ENCODE measurements at regions of chr18 and their contacts with region 1.

Region 1: DNA sequence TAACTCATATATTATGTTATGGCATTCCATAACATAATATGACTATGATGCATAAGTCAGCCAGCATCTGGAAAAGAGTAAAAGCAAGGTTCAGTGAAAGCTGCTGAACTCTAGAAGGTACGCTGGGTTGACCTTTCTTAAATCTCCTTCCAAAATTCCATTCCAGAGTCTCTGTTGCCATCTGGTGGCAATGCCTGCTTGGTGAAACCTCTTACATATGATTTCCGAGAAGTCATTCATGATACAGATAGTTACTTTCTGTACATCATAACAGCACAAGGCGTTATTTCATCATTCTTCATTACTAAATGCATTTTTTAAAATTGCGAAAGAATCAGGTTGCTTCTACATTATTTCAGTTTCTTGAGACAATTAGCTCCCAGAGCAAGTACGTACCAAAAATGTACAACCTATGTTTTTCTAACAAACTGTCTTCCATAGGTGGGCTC is 7.0 kb upstream of the EPG5 start:
- DNase-seq: peak; percentile 39 to 81 (median 63)
- ATAC-seq: peak; percentile 83
- H3K4me3 ChIP-seq: no peak overlapping the region
- H3K4me3 Mint-ChIP-seq: no peak overlapping the region
- H3K27ac ChIP-seq: no peak overlapping the region
- H3K27ac Mint-ChIP-seq: no peak overlapping the region
- H3K4me1 ChIP-seq: peaks cover 7% of the 10 kb centered on the region
- H3K4me1 Mint-ChIP-seq: peaks cover 6% of the 10 kb centered on the region
- H3K27me3 ChIP-seq: no peaks in the 10 kb centered on the region
- H3K27me3 Mint-ChIP-seq: no peaks in the 10 kb centered on the region
- CTCF ChIP-seq: peak; percentile 86

Region 2: DNA sequence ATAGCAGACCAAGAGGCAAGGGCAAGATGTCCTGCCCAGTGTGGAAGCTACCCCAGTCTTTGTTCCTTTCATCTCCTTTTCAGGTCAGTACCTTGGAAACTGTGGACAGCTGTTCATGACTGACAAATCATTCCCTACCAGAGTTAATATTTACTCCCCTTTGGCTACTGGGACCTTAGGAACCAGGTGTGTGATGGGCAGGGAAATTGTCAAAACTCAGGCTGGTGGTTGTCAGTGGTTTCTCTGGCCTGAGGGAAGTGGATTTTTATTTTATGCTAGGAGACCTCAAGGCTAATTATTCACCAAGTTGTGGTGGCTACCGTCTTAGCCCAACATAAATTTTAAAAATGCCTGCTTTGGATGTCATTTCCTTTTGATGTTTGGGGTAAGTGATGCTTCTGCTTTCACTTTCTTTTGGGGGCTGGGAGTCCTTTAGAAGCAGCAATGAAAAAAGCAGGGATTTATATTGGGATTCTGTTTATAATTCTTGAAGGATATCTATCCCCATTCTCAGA is 1174.1 kb before region 1 on chr18:
- CTCF ChIA-PET with region 1: no interaction called
- POLR2A ChIA-PET with region 1: no interaction called
- intact Hi-C with region 1: no loop called
- DNase-seq: peak in 2 of 9 experiments; percentile 3 to 27
- ATAC-seq: no peak
- H3K4me3 ChIP-seq: no peak overlapping the region
- H3K4me3 Mint-ChIP-seq: no peak overlapping the region
- H3K27ac ChIP-seq: peak overlapping the region in 1 of 2 experiments; percentile 1
- H3K27ac Mint-ChIP-seq: no peak overlapping the region
- H3K4me1 ChIP-seq: no peaks in the 10 kb centered on the region
- H3K4me1 Mint-ChIP-seq: peaks cover 3% of the 10 kb centered on the region
- H3K27me3 ChIP-seq: no peaks in the 10 kb centered on the region
- H3K27me3 Mint-ChIP-seq: no peaks in the 10 kb centered on the region
- CTCF ChIP-seq: no peak

Region 3: DNA sequence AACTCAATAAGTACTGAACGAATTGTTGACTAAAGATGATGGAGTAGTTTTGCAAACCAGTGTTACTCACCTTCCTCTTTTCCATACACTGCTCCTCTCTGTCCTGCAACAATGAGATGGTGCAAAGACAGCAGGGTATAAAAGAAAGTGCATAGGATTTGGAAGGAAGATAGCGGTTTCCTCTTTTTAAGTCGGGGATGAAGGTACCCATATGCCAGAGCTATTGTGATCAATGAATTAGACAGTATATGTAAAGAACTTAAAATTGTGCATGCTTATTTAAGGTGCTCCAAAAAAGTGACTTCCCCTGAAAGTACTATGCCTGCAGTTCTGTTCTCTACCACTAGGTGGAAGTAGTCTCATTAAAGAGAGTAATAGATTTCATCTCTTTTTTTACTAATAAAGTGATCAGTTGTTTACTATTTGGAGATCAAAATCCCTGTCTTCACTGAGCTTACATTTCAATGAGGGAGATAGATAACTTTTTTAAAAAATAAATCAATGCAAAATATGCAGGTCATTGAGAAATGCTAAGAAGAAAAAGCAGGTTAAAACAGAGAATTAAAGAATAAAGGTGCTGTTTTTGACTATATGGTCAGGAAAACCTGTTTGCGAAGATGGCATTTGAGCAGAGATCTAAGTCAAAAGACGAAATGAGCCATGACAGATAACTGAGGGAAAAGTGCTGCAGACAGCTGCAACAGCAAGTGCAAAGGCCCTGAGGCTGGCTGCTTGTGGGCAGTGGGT is 698.6 kb before region 1 on chr18:
- CTCF ChIA-PET with region 1: no interaction called
- POLR2A ChIA-PET with region 1: no interaction called
- intact Hi-C with region 1: loop called in 1 of 2 experiments (anchors 10 kb)
- DNase-seq: peak in 2 of 9 experiments; percentile 31 to 33
- ATAC-seq: no peak
- H3K4me3 ChIP-seq: no peak overlapping the region
- H3K4me3 Mint-ChIP-seq: no peak overlapping the region
- H3K27ac ChIP-seq: no peak overlapping the region
- H3K27ac Mint-ChIP-seq: no peak overlapping the region
- H3K4me1 ChIP-seq: no peaks in the 10 kb centered on the region
- H3K4me1 Mint-ChIP-seq: no peaks in the 10 kb centered on the region
- H3K27me3 ChIP-seq: no peaks in the 10 kb centered on the region
- H3K27me3 Mint-ChIP-seq: no peaks in the 10 kb centered on the region
- CTCF ChIP-seq: peak; percentile 92

Region 4: DNA sequence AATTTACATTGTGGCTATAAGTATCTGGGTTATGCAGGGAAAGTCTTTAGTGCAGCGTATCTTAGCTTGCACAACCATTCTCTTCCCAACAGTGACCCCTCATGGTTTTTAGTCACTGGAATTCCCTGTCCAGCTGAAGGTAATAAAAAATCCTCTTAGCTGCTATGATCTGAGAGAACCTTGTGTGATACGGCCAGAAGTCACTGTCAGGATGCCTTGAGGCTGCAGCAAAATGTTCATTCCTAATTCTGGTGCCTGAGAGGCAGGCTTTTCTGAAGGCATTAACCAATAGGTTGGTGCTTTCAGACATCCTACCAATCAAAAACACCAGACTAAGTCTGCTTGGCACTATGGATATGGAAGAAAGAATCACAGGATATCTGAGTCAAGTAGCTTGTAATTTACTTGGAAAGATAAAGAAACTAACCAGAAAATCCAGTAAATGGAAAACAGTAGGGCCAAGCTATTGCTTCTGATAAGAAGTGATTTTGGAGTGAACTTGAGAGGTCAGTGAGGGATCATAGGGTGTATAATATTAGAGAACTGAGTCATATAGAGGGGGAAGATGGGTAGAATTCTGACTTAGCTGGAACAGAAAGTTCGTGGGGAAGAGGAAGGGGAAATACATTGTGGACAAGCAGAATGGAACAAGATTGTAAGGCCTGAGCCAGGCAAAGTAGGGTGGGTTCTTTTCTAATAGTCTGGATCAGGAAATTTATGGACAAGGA is 447.8 kb before region 1 on chr18:
- CTCF ChIA-PET with region 1: no interaction called
- POLR2A ChIA-PET with region 1: no interaction called
- intact Hi-C with region 1: no loop called
- DNase-seq: no peak
- ATAC-seq: no peak
- H3K4me3 ChIP-seq: no peak overlapping the region
- H3K4me3 Mint-ChIP-seq: no peak overlapping the region
- H3K27ac ChIP-seq: no peak overlapping the region
- H3K27ac Mint-ChIP-seq: no peak overlapping the region
- H3K4me1 ChIP-seq: no peaks in the 10 kb centered on the region
- H3K4me1 Mint-ChIP-seq: no peaks in the 10 kb centered on the region
- H3K27me3 ChIP-seq: no peaks in the 10 kb centered on the region
- H3K27me3 Mint-ChIP-seq: peaks cover 8% of the 10 kb centered on the region
- CTCF ChIP-seq: no peak

Region 5: DNA sequence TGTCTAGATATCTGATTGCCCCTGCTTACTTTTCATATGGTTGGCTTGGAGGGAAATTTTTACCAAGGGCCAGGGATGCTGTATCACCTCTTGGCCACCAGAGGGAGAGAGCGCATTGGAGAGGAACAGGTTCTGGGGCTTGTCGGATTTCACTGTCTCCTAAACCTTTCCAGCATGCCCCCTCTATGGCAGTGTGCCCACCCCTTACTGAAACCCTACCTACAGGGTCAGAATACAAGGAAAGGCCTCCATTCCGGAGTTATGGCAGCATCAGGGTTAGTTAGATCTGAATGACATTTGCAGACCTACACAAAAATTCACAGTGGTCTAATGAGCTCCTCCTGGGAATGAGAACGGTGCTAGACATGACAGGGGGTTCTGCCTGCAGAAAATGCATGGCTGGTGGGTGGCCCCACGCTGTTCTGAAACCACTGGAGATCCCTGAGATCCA is 353.0 kb before region 1 on chr18:
- CTCF ChIA-PET with region 1: interaction called, 10 read pairs
- POLR2A ChIA-PET with region 1: no interaction called
- intact Hi-C with region 1: loop called in 1 of 2 experiments (anchors 1 kb)
- DNase-seq: peak in 7 of 9 experiments; percentile 10 to 66 (median 39)
- ATAC-seq: peak; percentile 56
- H3K4me3 ChIP-seq: no peak overlapping the region
- H3K4me3 Mint-ChIP-seq: no peak overlapping the region
- H3K27ac ChIP-seq: no peak overlapping the region
- H3K27ac Mint-ChIP-seq: no peak overlapping the region
- H3K4me1 ChIP-seq: no peaks in the 10 kb centered on the region
- H3K4me1 Mint-ChIP-seq: no peaks in the 10 kb centered on the region
- H3K27me3 ChIP-seq: no peaks in the 10 kb centered on the region
- H3K27me3 Mint-ChIP-seq: peaks cover 16% of the 10 kb centered on the region
- CTCF ChIP-seq: peak; percentile 92

Region 6: DNA sequence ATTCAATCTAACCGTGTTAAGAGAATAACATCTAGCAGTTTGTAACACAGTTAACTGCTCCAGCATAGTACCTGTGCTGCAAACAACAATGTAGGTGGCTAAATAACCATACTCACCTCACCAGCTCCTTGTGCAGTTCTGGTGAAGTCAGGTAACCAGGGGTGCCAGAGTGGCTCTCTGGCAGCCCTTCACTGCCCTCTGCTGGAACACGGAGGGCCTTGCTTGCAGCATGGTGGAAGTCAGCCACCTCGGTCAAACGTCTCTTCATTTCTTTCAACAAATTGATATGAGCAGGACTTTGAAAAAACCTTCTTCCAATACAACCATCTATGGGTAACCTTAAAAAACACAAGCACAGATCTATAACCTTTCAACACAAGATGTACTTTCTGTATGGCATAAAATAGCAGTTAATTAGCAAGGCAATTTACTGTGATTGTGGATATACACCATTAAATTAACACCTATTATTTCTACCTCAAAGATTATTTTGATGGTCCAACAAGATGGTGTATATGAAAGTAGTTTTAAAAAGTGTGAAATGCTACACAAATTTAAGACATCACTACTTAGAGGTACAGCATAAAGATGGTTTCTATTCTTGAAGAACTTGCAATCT is 63.6 kb before region 1 on chr18:
- CTCF ChIA-PET with region 1: interaction called, 4 read pairs
- POLR2A ChIA-PET with region 1: no interaction called
- intact Hi-C with region 1: loop called (anchors 5 kb)
- DNase-seq: peak; percentile 35 to 73 (median 63)
- ATAC-seq: peak; percentile 84
- H3K4me3 ChIP-seq: no peak overlapping the region
- H3K4me3 Mint-ChIP-seq: no peak overlapping the region
- H3K27ac ChIP-seq: no peak overlapping the region
- H3K27ac Mint-ChIP-seq: no peak overlapping the region
- H3K4me1 ChIP-seq: no peaks in the 10 kb centered on the region
- H3K4me1 Mint-ChIP-seq: no peaks in the 10 kb centered on the region
- H3K27me3 ChIP-seq: no peaks in the 10 kb centered on the region
- H3K27me3 Mint-ChIP-seq: no peaks in the 10 kb centered on the region
- CTCF ChIP-seq: peak; percentile 71

Region 7: GRCh38 chr18:45920367-45920766 is 53.7 kb before region 1 on chr18:
- CTCF ChIA-PET with region 1: interaction called, 9 read pairs
- POLR2A ChIA-PET with region 1: interaction called, 3 read pairs
- intact Hi-C with region 1: loop called in 1 of 2 experiments (anchors 1 kb)
- DNase-seq: peak in 2 of 9 experiments; percentile 26 to 31
- ATAC-seq: no peak
- H3K4me3 ChIP-seq: no peak overlapping the region
- H3K4me3 Mint-ChIP-seq: no peak overlapping the region
- H3K27ac ChIP-seq: no peak overlapping the region
- H3K27ac Mint-ChIP-seq: no peak overlapping the region
- H3K4me1 ChIP-seq: peaks cover 6% of the 10 kb centered on the region
- H3K4me1 Mint-ChIP-seq: peaks cover 16% of the 10 kb centered on the region
- H3K27me3 ChIP-seq: no peaks in the 10 kb centered on the region
- H3K27me3 Mint-ChIP-seq: no peaks in the 10 kb centered on the region
- CTCF ChIP-seq: no peak

Region 8: GRCh38 chr18:45993389-45993788 is 19.3 kb after region 1 on chr18:
- CTCF ChIA-PET with region 1: interaction called, 12 read pairs
- POLR2A ChIA-PET with region 1: interaction called, 3 read pairs
- intact Hi-C with region 1: no loop called
- DNase-seq: no peak
- ATAC-seq: no peak
- H3K4me3 ChIP-seq: no peak overlapping the region
- H3K4me3 Mint-ChIP-seq: no peak overlapping the region
- H3K27ac ChIP-seq: no peak overlapping the region
- H3K27ac Mint-ChIP-seq: no peak overlapping the region
- H3K4me1 ChIP-seq: peaks cover 20% of the 10 kb centered on the region
- H3K4me1 Mint-ChIP-seq: peaks cover 21% of the 10 kb centered on the region
- H3K27me3 ChIP-seq: no peaks in the 10 kb centered on the region
- H3K27me3 Mint-ChIP-seq: no peaks in the 10 kb centered on the region
- CTCF ChIP-seq: no peak

Region 9: DNA sequence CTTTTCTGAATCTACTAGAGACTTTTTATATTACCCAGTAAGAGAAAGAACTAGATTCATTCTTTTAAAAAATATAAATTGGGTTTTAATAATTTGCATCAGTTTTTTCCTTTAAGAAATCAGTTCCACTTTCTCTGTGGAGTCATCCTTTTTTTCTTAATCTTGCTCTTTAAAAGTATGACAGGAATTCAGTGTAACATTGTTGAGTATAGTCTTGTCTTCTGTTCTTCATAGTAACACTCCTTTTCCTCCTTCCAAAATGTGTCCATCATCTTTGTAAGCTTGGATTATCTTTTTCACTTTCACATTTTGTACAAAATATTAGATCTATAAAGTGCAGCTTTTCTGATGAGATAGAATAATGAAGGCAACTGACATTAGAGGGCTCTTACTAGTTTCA is 265.4 kb after region 1 on chr18:
- CTCF ChIA-PET with region 1: no interaction called
- POLR2A ChIA-PET with region 1: no interaction called
- intact Hi-C with region 1: no loop called
- DNase-seq: no peak
- ATAC-seq: no peak
- H3K4me3 ChIP-seq: no peak overlapping the region
- H3K4me3 Mint-ChIP-seq: no peak overlapping the region
- H3K27ac ChIP-seq: no peak overlapping the region
- H3K27ac Mint-ChIP-seq: no peak overlapping the region
- H3K4me1 ChIP-seq: no peaks in the 10 kb centered on the region
- H3K4me1 Mint-ChIP-seq: peaks cover 54% of the 10 kb centered on the region
- H3K27me3 ChIP-seq: no peaks in the 10 kb centered on the region
- H3K27me3 Mint-ChIP-seq: no peaks in the 10 kb centered on the region
- CTCF ChIP-seq: no peak